Natural killer cell (primary cell): ENCODE measurements at regions of chr6 and their contacts with region 1.

Region 1: GRCh38 chr6:81752138-81752920 is at the start of gene TENT5A:
- DNase-seq: peak; percentile 90 to 91
- ATAC-seq: peak; percentile 71 to 88 (median 74)
- H3K4me3 ChIP-seq: peak within 1 kb of the TSS; percentile 93
- H3K4me3 Mint-ChIP-seq: peak within 1 kb of the TSS; percentile 99
- H3K27ac ChIP-seq: peak within 1 kb of the TSS; percentile 96
- H3K27ac Mint-ChIP-seq: peak within 1 kb of the TSS; percentile 97 to 98
- H3K4me1 ChIP-seq: peaks cover 29% of the 10 kb centered on the region
- H3K4me1 Mint-ChIP-seq: peaks cover 52 to 56% of the 10 kb centered on the region in 2 donors
- H3K27me3 ChIP-seq: no peaks in the 10 kb centered on the region
- H3K27me3 Mint-ChIP-seq: peaks cover 0 to 6% of the 10 kb centered on the region in 2 donors
- CTCF ChIP-seq: no peak
- total RNA-seq, gene TENT5A: 22.9 to 23.8 (median 22.9) TPM

Region 2: GRCh38 chr6:79777713-79778579 is 1974.4 kb before region 1 on chr6:
- intact Hi-C with region 1: loop called (anchors 5 kb)
- DNase-seq: peak; percentile 71 to 94
- ATAC-seq: peak; percentile 86 to 98 (median 96)
- H3K4me3 ChIP-seq: no peak overlapping the region
- H3K4me3 Mint-ChIP-seq: peak overlapping the region; percentile 59
- H3K27ac ChIP-seq: no peak overlapping the region
- H3K27ac Mint-ChIP-seq: peak overlapping the region in 1 of 2 donors; percentile 7
- H3K4me1 ChIP-seq: peaks cover 7% of the 10 kb centered on the region
- H3K4me1 Mint-ChIP-seq: peaks cover 6 to 11% of the 10 kb centered on the region in 2 donors
- H3K27me3 ChIP-seq: no peaks in the 10 kb centered on the region
- H3K27me3 Mint-ChIP-seq: peaks cover 10 to 14% of the 10 kb centered on the region in 2 donors
- CTCF ChIP-seq: peak; percentile 95

Region 3: GRCh38 chr6:80004173-80005072 is 1747.9 kb before region 1 on chr6 and contains the start of gene TTK:
- intact Hi-C with region 1: loop called (anchors 2 kb)
- DNase-seq: peak; percentile 92 to 96
- ATAC-seq: peak; percentile 97 to 100 (median 98)
- H3K4me3 ChIP-seq: peak within 1 kb of the TSS; percentile 78
- H3K4me3 Mint-ChIP-seq: peak within 1 kb of the TSS; percentile 95
- H3K27ac ChIP-seq: peak within 1 kb of the TSS; percentile 89
- H3K27ac Mint-ChIP-seq: peak within 1 kb of the TSS; percentile 93 to 99
- H3K4me1 ChIP-seq: peaks cover 15% of the 10 kb centered on the region
- H3K4me1 Mint-ChIP-seq: peaks cover 15 to 25% of the 10 kb centered on the region in 2 donors
- H3K27me3 ChIP-seq: no peaks in the 10 kb centered on the region
- H3K27me3 Mint-ChIP-seq: no peaks in the 10 kb centered on the region
- CTCF ChIP-seq: no peak
- total RNA-seq, gene TTK: 0.87 to 1.7 (median 1.2) TPM

Region 4: GRCh38 chr6:80214436-80215022 is 1537.8 kb before region 1 on chr6:
- intact Hi-C with region 1: loop called (anchors 5 kb)
- DNase-seq: peak in 1 of 2 donors; percentile 36
- ATAC-seq: peak; percentile 49 to 85 (median 70)
- H3K4me3 ChIP-seq: no peak overlapping the region
- H3K4me3 Mint-ChIP-seq: no peak overlapping the region
- H3K27ac ChIP-seq: no peak overlapping the region
- H3K27ac Mint-ChIP-seq: no peak overlapping the region
- H3K4me1 ChIP-seq: no peaks in the 10 kb centered on the region
- H3K4me1 Mint-ChIP-seq: no peaks in the 10 kb centered on the region
- H3K27me3 ChIP-seq: no peaks in the 10 kb centered on the region
- H3K27me3 Mint-ChIP-seq: no peaks in the 10 kb centered on the region
- CTCF ChIP-seq: peak; percentile 53

Region 5: DNA sequence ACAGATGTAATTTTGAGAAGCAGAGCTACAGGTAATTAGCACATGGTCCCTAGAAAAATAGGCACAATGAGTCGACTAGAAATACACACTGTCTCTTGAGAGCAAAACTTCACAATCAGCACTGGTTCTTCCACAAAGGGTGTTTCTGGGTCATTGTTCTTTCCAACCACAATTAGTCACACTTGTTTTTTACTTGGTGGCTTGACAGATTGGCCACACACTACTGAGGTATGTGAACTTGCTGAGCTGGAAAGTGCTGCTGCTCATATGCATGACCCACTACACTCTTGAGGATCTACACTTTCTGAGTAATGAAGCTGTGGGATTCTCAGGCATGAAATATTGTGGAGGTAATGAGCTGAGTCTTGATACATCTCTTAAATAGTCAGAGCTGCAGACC is 1298.1 kb before region 1 on chr6:
- intact Hi-C with region 1: loop called (anchors 1 kb)
- DNase-seq: peak; percentile 18 to 31
- ATAC-seq: peak; percentile 83 to 93 (median 84)
- H3K4me3 ChIP-seq: no peak overlapping the region
- H3K4me3 Mint-ChIP-seq: peak overlapping the region; percentile 82
- H3K27ac ChIP-seq: peak overlapping the region; percentile 74
- H3K27ac Mint-ChIP-seq: peak overlapping the region; percentile 86 to 87
- H3K4me1 ChIP-seq: peaks cover 19% of the 10 kb centered on the region
- H3K4me1 Mint-ChIP-seq: peaks cover 58 to 60% of the 10 kb centered on the region in 2 donors
- H3K27me3 ChIP-seq: no peaks in the 10 kb centered on the region
- H3K27me3 Mint-ChIP-seq: no peaks in the 10 kb centered on the region
- CTCF ChIP-seq: no peak

Region 6: DNA sequence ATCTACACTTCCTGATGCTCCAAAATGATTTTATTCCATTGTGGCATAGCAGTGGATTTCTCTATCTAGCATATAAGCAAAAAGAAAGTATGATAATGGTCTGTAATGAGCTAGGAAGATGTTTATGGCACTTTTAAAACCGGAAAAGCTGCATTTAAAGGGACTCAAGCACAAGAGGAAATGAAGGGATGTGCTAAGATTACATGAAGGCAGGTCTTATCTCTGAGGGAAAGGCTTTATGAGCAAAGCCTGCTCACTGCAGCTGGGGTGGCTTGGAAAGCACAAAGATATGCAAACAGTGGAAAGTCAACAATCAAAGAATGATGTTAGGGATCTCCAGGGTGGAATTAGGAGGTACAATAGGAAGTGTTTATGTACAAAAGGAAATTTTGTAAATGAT is 138.0 kb before region 1 on chr6:
- intact Hi-C with region 1: no loop called
- DNase-seq: no peak
- ATAC-seq: no peak
- H3K4me3 ChIP-seq: no peak overlapping the region
- H3K4me3 Mint-ChIP-seq: no peak overlapping the region
- H3K27ac ChIP-seq: no peak overlapping the region
- H3K27ac Mint-ChIP-seq: no peak overlapping the region
- H3K4me1 ChIP-seq: no peaks in the 10 kb centered on the region
- H3K4me1 Mint-ChIP-seq: peaks cover 4 to 6% of the 10 kb centered on the region in 2 donors
- H3K27me3 ChIP-seq: no peaks in the 10 kb centered on the region
- H3K27me3 Mint-ChIP-seq: no peaks in the 10 kb centered on the region
- CTCF ChIP-seq: no peak